Activated naive CD8-positive, alpha-beta T cell treated with anti-CD3 and anti-CD28 coated beads, Interleukin-2, amount 10 ng/mL, durations not matched to agents 7 days and 5 days (primary cell): ENCODE measurements at regions of chr6 and their contacts with region 1.

Region 1: DNA sequence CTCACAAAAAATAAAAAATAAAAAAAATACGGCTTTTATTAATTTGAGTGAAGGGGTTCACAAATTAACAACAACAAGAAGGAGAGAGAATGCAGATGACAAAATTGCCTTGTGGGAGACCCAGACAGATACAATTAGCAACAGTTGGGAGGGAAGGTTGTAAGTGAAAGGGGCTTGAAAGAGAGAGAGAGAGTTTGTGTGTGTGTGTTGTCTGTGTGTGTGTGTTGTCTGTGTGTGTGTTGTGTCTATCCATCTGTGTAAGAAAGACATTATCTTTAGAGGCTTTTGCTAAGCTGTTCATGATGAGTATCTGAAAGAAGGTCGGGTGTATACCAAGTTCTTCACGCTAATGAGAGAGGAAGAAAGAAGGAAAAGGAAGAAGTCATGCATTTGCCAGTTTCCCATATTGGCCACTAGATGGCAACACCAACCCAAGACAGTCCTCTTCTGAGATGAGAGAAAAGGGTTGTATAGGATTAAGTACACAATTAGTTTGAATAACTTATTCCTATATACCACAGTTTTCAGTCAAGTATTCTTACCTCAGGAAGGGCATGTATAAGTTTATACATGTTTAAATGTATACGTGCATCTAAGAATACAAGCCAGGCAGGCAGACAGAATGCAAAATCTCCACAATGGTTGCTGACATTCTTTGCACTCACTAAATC is 63.7 kb upstream of the CD2AP start:
- DNase-seq: no peak
- ATAC-seq: peak; percentile 76
- H3K4me3 Mint-ChIP-seq: peak overlapping the region; percentile 85
- H3K27ac Mint-ChIP-seq: peak overlapping the region; percentile 90
- H3K4me1 Mint-ChIP-seq: peaks cover 23% of the 10 kb centered on the region
- H3K27me3 Mint-ChIP-seq: peaks cover 5% of the 10 kb centered on the region

Region 2: DNA sequence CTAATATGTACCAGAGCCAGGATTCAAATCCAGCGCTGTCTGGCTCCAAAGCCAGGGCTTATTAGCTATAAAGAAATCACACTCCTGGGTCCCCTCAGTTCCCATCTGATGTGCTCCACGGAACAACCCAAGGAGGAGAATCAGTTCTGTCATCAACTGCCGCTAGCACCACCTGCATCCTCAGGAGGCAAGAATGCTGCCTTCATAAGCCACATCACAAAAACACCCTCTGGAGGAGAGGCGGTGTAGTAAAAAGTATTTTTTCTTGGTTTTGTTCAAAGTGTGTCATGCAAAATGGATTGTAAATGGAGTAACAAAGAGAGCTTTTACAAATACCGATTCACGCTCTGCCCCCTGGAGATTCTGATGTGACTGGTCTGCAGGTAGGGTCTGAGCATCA is 161.3 kb before region 1 on chr6:
- POLR2A ChIA-PET with region 1: no interaction called
- DNase-seq: no peak
- ATAC-seq: no peak
- H3K4me3 Mint-ChIP-seq: no peak overlapping the region
- H3K27ac Mint-ChIP-seq: no peak overlapping the region
- H3K4me1 Mint-ChIP-seq: peaks cover 2% of the 10 kb centered on the region
- H3K27me3 Mint-ChIP-seq: no peaks in the 10 kb centered on the region

Region 3: DNA sequence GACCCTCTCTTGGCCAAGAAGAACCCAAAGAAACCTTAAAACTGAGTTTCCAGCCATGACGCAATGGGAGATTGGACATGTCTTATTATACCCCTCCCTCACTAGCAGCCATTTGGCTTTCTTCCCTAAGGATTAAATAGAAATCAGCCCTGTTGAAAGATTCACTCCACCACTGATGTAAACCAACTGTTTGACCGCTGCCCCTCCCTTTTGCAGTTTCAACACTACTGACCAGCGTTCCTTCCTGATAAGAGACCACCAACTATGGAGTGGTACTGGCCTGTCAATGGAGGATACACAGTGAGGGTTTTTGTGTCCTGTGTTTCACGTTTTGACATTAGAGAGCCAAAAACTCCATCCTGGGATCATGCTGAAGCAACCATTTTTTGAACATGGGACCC is 10.5 kb after region 1 on chr6:
- POLR2A ChIA-PET with region 1: no interaction called
- DNase-seq: no peak
- ATAC-seq: no peak
- H3K4me3 Mint-ChIP-seq: no peak overlapping the region
- H3K27ac Mint-ChIP-seq: peak overlapping the region; percentile 19
- H3K4me1 Mint-ChIP-seq: peaks cover 16% of the 10 kb centered on the region
- H3K27me3 Mint-ChIP-seq: peaks cover 3% of the 10 kb centered on the region

Region 4: GRCh38 chr6:47477497-47478232 is 63.8 kb after region 1 on chr6 and contains the start of gene CD2AP:
- POLR2A ChIA-PET with region 1: interaction called, 101 read pairs
- DNase-seq: peak; percentile 94
- ATAC-seq: peak; percentile 86
- H3K4me3 Mint-ChIP-seq: peak within 1 kb of the TSS; percentile 100
- H3K27ac Mint-ChIP-seq: peak within 1 kb of the TSS; percentile 99
- H3K4me1 Mint-ChIP-seq: peaks cover 30% of the 10 kb centered on the region
- H3K27me3 Mint-ChIP-seq: no peaks in the 10 kb centered on the region
- total RNA-seq, gene CD2AP: 38.9 to 45.4 TPM

Region 5: GRCh38 chr6:47631269-47631772 is 217.4 kb after region 1 on chr6:
- POLR2A ChIA-PET with region 1: interaction called, 12 read pairs
- DNase-seq: peak; percentile 34
- ATAC-seq: peak; percentile 76
- H3K4me3 Mint-ChIP-seq: no peak overlapping the region
- H3K27ac Mint-ChIP-seq: peak overlapping the region; percentile 72
- H3K4me1 Mint-ChIP-seq: peaks cover 9% of the 10 kb centered on the region
- H3K27me3 Mint-ChIP-seq: no peaks in the 10 kb centered on the region